PC-9 (cell line): ENCODE measurements at regions of chr11 and their contacts with region 1.

Region 1: GRCh38 chr11:22304337-22304961 is 33.7 kb upstream of the SLC17A6 start:
- DNase-seq: no peak
- H3K4me3 ChIP-seq: no peak overlapping the region
- H3K27ac ChIP-seq: no peak overlapping the region
- H3K4me1 ChIP-seq: no peaks in the 10 kb centered on the region
- H3K27me3 ChIP-seq: no peaks in the 10 kb centered on the region
- CTCF ChIP-seq: peak; percentile 82

Region 2: GRCh38 chr11:22244986-22245592 is 59.4 kb before region 1 on chr11:
- CTCF ChIA-PET with region 1: interaction called, 3 read pairs
- POLR2A ChIA-PET with region 1: no interaction called
- intact Hi-C with region 1: loop called (anchors 5 kb)
- DNase-seq: peak in 1 of 2 experiments; percentile 5
- H3K4me3 ChIP-seq: no peak overlapping the region
- H3K27ac ChIP-seq: no peak overlapping the region
- H3K4me1 ChIP-seq: no peaks in the 10 kb centered on the region
- H3K27me3 ChIP-seq: no peaks in the 10 kb centered on the region
- CTCF ChIP-seq: peak; percentile 65

Region 3: GRCh38 chr11:22640862-22641261 is 336.4 kb after region 1 on chr11:
- CTCF ChIA-PET with region 1: no interaction called
- POLR2A ChIA-PET with region 1: no interaction called
- intact Hi-C with region 1: no loop called
- DNase-seq: no peak
- H3K4me3 ChIP-seq: no peak overlapping the region
- H3K27ac ChIP-seq: no peak overlapping the region
- H3K4me1 ChIP-seq: no peaks in the 10 kb centered on the region
- H3K27me3 ChIP-seq: no peaks in the 10 kb centered on the region
- CTCF ChIP-seq: no peak